Heart right ventricle (tissue), 16 donors: ENCODE measurements at regions of chr13 and their contacts with region 1.

Region 1: DNA sequence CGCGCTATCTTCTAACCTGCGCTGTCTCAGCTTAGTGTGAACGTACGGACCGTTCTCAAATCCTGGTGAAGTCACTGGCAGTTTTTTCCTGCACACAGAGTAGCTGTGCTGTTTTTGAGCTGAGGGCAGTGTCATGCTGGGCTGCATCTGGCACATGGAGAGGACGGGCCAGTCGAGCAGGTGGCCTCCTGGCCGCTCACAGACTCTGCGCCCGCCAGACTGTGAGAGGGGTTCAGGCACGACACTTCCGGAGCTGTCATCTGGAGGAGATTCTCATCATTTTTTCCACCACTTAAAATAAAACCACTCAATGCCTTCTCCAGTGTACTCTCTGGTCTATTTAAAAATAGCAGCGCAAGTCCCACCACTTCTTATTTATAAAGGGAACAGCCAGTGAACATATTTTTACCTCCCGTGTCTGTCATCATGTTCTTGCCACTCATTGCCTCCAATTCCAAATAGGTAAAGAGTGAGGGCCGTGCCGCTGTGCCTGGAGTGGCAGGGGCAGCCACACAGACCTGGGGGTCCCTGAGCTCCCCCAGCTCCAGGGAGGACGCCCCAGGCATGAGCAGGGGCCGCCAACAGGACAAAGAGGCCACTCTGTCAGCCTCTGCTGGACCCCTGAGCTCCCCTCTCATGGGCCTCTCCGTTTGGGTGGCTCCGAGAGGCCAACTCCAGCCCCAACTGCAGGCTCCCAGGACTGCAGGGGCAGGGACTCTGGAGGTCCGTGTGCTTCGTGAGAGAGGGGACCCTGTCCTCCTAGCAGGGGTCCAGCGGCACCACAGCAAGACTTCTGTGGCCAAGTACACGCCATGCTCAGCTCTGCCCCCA is 36.9 kb upstream of the GRTP1 start:
- DNase-seq: peak; percentile 70 to 74
- ATAC-seq: peak; percentile 49 to 85 (median 78)
- H3K4me3 ChIP-seq: peak overlapping the region in 1 of 10 donors; percentile 8
- H3K27ac ChIP-seq: peak overlapping the region; percentile 53 to 99 (median 94)
- H3K4me1 ChIP-seq: peaks cover 0 to 73% (median 28%) of the 10 kb centered on the region in 9 donors
- H3K27me3 ChIP-seq: peaks cover 0 to 11% (median 0%) of the 10 kb centered on the region in 7 donors
- CTCF ChIP-seq: no peak

Region 2: GRCh38 chr13:113049521-113049941 is 351.3 kb before region 1 on chr13:
- intact Hi-C with region 1: no loop called
- DNase-seq: peak in 1 of 2 donors; percentile 34
- ATAC-seq: peak; percentile 19 to 76 (median 64)
- H3K4me3 ChIP-seq: no peak overlapping the region
- H3K27ac ChIP-seq: peak overlapping the region in 3 of 10 donors; percentile 2 to 44 (median 35)
- H3K4me1 ChIP-seq: peaks cover 4 to 62% (median 28%) of the 10 kb centered on the region in 9 donors
- H3K27me3 ChIP-seq: peaks cover 0 to 9% (median 0%) of the 10 kb centered on the region in 7 donors
- CTCF ChIP-seq: no peak

Region 3: DNA sequence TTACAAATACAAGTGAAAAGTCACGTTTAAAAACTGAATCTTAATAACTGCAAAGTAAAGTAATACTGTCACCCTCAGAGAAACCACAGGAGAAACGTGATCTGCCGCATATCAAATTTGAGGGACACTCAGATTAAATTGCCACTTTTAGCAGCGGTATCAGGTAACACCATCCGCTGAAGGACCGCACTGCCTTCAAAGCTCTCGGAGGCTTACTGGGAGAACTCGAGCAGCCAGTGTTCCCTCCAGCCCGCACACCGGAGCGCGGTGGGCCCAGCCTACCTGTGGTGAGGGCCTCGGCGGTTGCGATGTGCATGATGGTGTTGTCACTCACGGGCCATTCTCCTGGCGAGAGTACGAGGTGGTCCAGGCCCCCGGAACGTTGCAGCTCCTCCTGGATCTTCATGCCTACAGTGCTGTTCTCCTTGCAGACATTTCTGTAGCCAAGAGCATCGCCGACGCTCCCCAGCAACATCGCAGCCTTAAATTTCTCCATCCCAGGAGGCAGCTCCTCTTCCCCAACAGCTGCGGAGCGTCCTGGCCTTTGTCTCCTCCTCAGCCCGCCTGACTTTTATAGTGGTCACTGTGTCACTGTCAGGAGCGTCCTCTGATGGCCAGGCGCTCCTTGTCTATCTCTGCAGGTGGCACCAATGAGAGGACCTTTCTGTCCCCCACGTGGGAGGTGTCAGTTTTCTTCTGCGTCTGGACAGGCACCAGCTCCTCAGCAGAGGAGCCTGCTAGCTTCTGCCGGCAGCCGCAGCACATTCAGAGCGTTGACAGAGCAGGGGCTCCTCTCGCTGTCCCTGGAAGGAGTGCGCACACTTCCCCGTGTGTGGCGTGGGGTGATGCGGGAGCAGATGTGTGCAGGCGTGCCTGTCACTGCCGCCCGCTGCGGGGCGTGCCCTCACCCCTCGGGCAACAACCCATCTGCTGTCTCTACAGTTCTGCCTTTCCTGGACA is 52.4 kb after region 1 on chr13 and contains the start of gene ADPRHL1:
- intact Hi-C with region 1: loop called in 1 of 10 experiments (anchors 5 kb)
- DNase-seq: peak; percentile 61 to 78
- ATAC-seq: peak; percentile 61 to 83 (median 78)
- H3K4me3 ChIP-seq: peak within 1 kb of the TSS; percentile 1 to 67 (median 53)
- H3K27ac ChIP-seq: peak within 1 kb of the TSS; percentile 62 to 93 (median 81)
- H3K4me1 ChIP-seq: peaks cover 13 to 44% (median 18%) of the 10 kb centered on the region in 9 donors
- H3K27me3 ChIP-seq: no peaks in the 10 kb centered on the region
- CTCF ChIP-seq: no peak
- total RNA-seq, gene ADPRHL1: 381 to 939 (median 762) TPM